ENCODE measurements at regions of chr5 and their contacts with region 1.

Region 1: DNA sequence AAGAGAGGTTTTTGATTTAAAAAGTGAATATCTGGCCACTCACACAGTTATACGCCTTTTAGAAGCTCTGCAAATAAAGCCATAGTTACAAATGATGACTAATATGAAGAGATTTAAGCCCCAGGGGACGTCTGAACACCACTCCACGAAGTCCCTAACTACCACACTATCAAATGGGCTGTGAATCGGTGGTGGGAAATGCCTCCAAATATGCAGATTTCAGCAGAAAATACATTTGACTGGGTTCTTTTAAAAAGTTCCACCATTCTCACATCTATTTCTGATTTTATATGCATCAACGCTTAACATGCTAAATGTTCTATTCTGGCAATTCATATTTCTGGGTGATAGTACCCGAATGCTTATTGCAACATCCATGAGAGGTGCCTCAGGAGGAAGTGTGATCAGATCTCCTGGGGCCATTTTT is 22.5 kb downstream of the TICAM2 start:
- DNase-seq: no peak
- ATAC-seq: no peak
- H3K4me3 ChIP-seq: no peak overlapping the region
- H3K4me1 ChIP-seq: no peaks in the 10 kb centered on the region
- CTCF ChIP-seq: no peak

Region 2: GRCh38 chr5:115309751-115310370 is 269.9 kb before region 1 on chr5:
- intact Hi-C with region 1: loop called in 1 of 2 experiments (anchors 5 kb)
- DNase-seq: no peak
- ATAC-seq: no peak
- H3K4me3 ChIP-seq: no peak overlapping the region
- H3K4me1 ChIP-seq: no peaks in the 10 kb centered on the region
- CTCF ChIP-seq: peak; percentile 24

Region 3: GRCh38 chr5:115377468-115378217 is 202.1 kb before region 1 on chr5:
- intact Hi-C with region 1: loop called in 1 of 2 experiments (anchors 10 kb)
- DNase-seq: no peak
- ATAC-seq: peak; percentile 70
- H3K4me3 ChIP-seq: no peak overlapping the region
- H3K4me1 ChIP-seq: peaks cover 8% of the 10 kb centered on the region
- CTCF ChIP-seq: no peak

Region 4: GRCh38 chr5:115398719-115399118 is 181.0 kb before region 1 on chr5:
- intact Hi-C with region 1: no loop called
- DNase-seq: no peak
- ATAC-seq: no peak
- H3K4me3 ChIP-seq: no peak overlapping the region
- H3K4me1 ChIP-seq: peaks cover 4% of the 10 kb centered on the region
- CTCF ChIP-seq: no peak

Measured in mucosa of descending colon (tissue), 3 donors.